Posterior vena cava (tissue), 2 donors: ENCODE measurements at regions of chr5 and their contacts with region 1.

Region 1: GRCh38 chr5:82004511-82004910 is 32.7 kb downstream of the ATG10 start:
- DNase-seq: no peak

Region 2: DNA sequence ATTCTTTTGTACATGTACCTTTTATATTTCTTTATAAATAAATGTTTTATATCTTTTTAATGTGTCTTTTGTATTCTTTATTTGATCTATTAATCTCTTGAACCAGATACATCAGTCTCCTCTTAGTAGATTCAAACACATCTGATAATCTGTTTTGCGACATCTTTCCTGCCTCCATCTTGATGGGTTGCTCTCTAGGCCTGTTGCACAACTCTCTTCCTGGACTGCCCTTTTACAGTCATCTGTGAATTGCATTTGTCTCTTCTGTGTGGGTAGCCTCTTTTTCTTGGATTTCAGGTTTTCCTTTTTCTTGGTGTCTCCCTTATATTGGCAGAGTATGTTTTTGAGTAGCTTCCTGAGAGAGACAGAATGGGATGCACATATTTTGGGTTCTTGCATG is 1590.4 kb before region 1 on chr5:
- intact Hi-C with region 1: loop called in 1 of 2 experiments (anchors 10 kb)
- DNase-seq: no peak

Region 3: DNA sequence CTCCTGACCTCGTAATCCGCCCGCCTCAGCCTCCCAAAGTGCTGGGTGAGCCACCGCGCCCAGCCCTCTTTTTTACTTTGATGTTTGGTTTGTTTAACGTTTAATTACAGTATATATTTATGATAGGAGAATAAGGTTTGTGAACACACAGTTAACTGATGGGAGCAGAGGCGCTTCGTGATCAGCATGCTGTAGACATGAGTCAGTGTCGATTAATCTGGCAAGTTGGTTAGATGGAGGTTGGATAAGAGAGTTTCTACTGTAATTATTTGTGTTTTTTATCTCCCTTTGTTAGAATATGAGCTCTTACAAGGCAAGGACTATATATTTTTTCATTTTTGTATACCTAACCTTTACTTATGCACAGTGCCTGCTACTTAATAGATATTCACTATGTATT is 18.4 kb before region 1 on chr5:
- intact Hi-C with region 1: no loop called
- DNase-seq: no peak